IMR-90 (cell line): ENCODE measurements at regions of chr16 and their contacts with region 1.

Region 1: GRCh38 chr16:71808593-71809459 is at the start of gene AP1G1:
- DNase-seq: peak; percentile 99
- ATAC-seq: peak; percentile 94
- H3K4me3 ChIP-seq: peak within 1 kb of the TSS; percentile 61
- H3K27ac ChIP-seq: peak within 1 kb of the TSS; percentile 99
- H3K4me1 ChIP-seq: peaks cover 10% of the 10 kb centered on the region
- H3K27me3 ChIP-seq: no peaks in the 10 kb centered on the region
- CTCF ChIP-seq: no peak
- POLR2A ChIP-seq: peak; percentile 96
- RAD21 ChIP-seq: no peak
- total RNA-seq, gene AP1G1: 86.1 and 86.7 TPM in 2 replicates

Region 2: DNA sequence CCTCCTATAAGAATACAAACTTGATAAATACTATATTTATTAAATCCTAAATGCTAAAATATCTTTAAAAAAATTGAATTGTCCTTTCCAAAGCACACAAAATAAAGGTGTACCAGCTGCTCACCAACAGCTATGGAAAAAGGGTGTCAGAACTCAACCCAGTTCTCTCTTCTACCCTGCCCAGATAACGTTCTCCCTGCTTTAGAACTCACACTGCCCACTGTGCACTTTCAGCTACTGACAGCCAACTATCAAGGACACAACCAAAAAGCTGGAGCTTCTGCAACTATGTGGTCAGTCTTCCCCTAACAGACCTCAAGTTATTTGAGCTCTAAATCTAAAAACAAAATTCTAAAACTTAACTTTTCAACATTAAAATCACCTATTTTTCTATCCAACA is 13.9 kb before region 1 on chr16:
- CTCF ChIA-PET with region 1: no interaction called
- POLR2A ChIA-PET with region 1: no interaction called
- dilution Hi-C with region 1: no loop called
- in situ Hi-C with region 1: no loop called
- intact Hi-C with region 1: loop called (anchors 1 kb)
- DNase-seq: no peak
- ATAC-seq: no peak
- H3K4me3 ChIP-seq: no peak overlapping the region
- H3K27ac ChIP-seq: peak overlapping the region; percentile 22; the same call in 1 of the 2 replicates
- H3K4me1 ChIP-seq: peaks cover 7% of the 10 kb centered on the region
- H3K27me3 ChIP-seq: no peaks in the 10 kb centered on the region
- CTCF ChIP-seq: no peak
- POLR2A ChIP-seq: no peak
- RAD21 ChIP-seq: no peak

Region 3: DNA sequence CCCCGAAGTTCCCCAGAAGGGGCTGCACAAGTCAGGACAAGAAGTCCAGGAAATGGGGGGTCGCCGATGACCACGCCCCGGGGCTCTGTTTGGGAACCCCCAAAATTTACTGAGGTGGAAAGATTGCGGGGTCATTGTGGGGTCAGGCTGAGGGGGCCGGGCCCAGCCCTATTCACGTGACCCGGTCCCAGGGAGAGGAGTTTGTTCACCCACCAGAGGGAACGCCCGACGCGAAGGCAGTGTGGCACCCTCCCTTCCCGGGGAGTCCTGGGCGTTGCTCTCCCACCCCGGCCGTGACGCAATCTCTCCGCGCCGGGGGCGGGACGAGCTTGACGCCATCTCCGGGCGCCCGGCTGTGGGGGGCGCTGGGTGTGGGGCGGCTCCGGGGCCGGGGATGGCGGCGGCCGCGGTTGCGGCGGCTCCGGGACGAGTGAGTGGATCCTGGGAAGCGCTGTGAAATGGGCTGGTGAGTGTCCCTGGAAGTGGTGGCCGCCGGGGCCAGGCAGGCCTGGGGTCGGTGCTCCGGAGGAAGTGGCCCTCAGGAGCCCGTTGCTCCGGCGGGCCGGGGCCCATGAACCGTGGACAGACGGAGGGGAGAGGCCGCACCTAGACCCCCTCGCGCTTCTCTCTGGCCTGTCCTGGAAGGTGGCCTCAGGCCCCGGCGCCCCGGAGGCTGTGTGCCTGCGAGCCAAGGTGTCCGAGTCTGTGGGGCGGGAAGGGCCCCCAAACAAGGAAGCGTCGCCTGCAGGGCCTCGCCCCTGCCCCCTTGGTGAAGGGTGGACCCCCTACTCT is 37.0 kb after region 1 on chr16 and contains the start of gene ATXN1L:
- CTCF ChIA-PET with region 1: no interaction called
- POLR2A ChIA-PET with region 1: no interaction called
- dilution Hi-C with region 1: no loop called
- in situ Hi-C with region 1: no loop called
- intact Hi-C with region 1: loop called (anchors 2 kb)
- DNase-seq: peak; percentile 88
- ATAC-seq: peak; percentile 98
- H3K4me3 ChIP-seq: peak within 1 kb of the TSS; percentile 97
- H3K27ac ChIP-seq: peak within 1 kb of the TSS; percentile 81
- H3K4me1 ChIP-seq: peaks cover 3% of the 10 kb centered on the region; the same call in 1 of the 2 replicates
- H3K27me3 ChIP-seq: no peaks in the 10 kb centered on the region
- CTCF ChIP-seq: no peak; the same call in 1 of the 2 replicates
- POLR2A ChIP-seq: peak; percentile 90
- RAD21 ChIP-seq: no peak
- total RNA-seq, gene ATXN1L: 5.2 and 5.8 TPM in 2 replicates

Region 4: DNA sequence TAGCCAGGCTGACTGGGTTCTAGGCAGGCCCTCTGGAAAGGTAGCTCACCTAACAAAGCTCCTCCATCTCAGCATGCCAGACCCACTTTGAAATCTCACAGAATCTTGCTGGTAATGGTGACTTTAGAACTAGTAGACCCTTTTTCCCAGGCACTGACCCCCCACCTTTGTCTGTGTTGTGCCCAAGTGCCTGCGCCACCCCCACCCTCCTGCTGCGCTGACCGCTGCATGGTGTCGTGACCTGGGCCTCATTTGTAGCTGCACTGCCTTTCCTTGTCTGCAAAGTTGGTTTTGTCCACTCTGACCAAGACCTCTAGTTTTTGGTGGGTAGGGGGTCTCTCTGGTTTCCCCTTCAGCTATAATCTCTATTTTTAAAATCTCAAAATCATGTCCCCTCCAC is 43.7 kb after region 1 on chr16:
- CTCF ChIA-PET with region 1: no interaction called
- POLR2A ChIA-PET with region 1: interaction called, 11 read pairs
- dilution Hi-C with region 1: no loop called
- in situ Hi-C with region 1: no loop called
- intact Hi-C with region 1: no loop called
- DNase-seq: no peak
- ATAC-seq: no peak
- H3K4me3 ChIP-seq: no peak overlapping the region
- H3K27ac ChIP-seq: no peak overlapping the region
- H3K4me1 ChIP-seq: no peaks in the 10 kb centered on the region
- H3K27me3 ChIP-seq: no peaks in the 10 kb centered on the region
- CTCF ChIP-seq: no peak
- POLR2A ChIP-seq: no peak
- RAD21 ChIP-seq: no peak